CD4-positive, alpha-beta T cell (primary cell): ENCODE measurements at regions of chr6 and their contacts with region 1.

Region 1: GRCh38 chr6:17599885-17600526 is at the start of gene FAM8A1:
- DNase-seq: peak; percentile 93 to 98 (median 96)
- ATAC-seq: peak; percentile 88
- H3K4me3 ChIP-seq: peak within 1 kb of the TSS; percentile 69
- H3K4me3 Mint-ChIP-seq: peak within 1 kb of the TSS; percentile 92
- H3K27ac ChIP-seq: peak within 1 kb of the TSS; percentile 48 to 85
- H3K27ac Mint-ChIP-seq: peak within 1 kb of the TSS; percentile 86
- H3K4me1 ChIP-seq: peaks cover 24% of the 10 kb centered on the region
- H3K4me1 Mint-ChIP-seq: peaks cover 50% of the 10 kb centered on the region
- H3K27me3 ChIP-seq: no peaks in the 10 kb centered on the region
- H3K27me3 Mint-ChIP-seq: no peaks in the 10 kb centered on the region
- CTCF ChIP-seq: peak; percentile 29
- total RNA-seq, gene FAM8A1: 31.4 to 31.9 TPM

Region 2: DNA sequence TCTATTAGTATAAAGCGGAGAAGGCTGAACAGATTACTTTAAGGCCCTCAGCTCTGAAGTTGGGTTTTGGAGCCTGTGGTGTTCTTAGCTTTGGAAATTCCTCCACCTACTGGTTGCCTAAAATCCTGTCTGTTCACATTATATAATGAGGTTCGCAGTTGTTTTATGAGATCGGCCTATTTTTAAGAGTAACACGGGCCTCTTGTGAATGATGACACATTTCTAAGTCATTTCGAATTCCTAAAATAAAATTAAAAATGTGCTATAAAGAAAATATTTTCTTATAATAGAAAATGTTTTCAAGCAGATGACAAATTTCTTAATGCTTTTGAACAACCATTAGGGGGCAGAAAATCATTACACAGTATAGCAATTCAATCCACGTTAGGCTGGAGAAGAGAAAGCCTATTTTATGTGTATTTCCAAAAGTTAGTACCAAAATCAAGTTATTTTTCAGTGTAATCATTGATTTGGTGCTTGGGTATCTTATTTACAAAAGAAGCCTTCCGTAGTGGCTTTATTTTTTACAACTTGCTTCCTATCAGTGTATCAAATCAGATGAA is 15.7 kb before region 1 on chr6:
- CTCF ChIA-PET with region 1: interaction called, 4 read pairs
- POLR2A ChIA-PET with region 1: interaction called, 51 read pairs
- intact Hi-C with region 1: loop called in 1 of 2 experiments (anchors 1 kb)
- DNase-seq: peak in 4 of 14 experiments; percentile 17 to 70 (median 61)
- ATAC-seq: peak; percentile 69
- H3K4me3 ChIP-seq: no peak overlapping the region
- H3K4me3 Mint-ChIP-seq: no peak overlapping the region
- H3K27ac ChIP-seq: no peak overlapping the region
- H3K27ac Mint-ChIP-seq: peak overlapping the region; percentile 7
- H3K4me1 ChIP-seq: peaks cover 5% of the 10 kb centered on the region
- H3K4me1 Mint-ChIP-seq: peaks cover 10% of the 10 kb centered on the region
- H3K27me3 ChIP-seq: peaks cover 0 to 3% of the 10 kb centered on the region in 2 experiments
- H3K27me3 Mint-ChIP-seq: peaks cover 5% of the 10 kb centered on the region
- CTCF ChIP-seq: peak; percentile 99

Region 3: DNA sequence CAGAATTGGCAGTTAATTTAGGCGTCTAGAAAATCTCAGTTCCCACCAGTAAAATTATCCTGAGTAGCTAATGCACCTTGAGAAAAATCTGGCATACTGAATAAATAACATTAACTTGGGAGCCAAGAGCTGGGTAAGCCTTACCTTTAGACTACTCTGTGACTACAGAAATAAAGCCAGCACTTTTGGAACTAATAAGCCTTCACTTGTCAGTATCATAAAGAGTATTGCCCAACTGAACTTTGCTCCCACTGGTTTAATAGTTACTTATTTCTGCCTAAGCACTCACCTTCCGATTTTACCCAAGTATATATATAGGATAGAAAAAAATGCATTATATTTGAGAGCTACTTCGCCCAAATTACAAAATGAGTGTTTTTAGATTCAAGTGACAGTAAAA is 10.8 kb after region 1 on chr6:
- CTCF ChIA-PET with region 1: interaction called, 4 read pairs
- POLR2A ChIA-PET with region 1: interaction called, 15 read pairs
- intact Hi-C with region 1: no loop called
- DNase-seq: no peak
- ATAC-seq: no peak
- H3K4me3 ChIP-seq: no peak overlapping the region
- H3K4me3 Mint-ChIP-seq: no peak overlapping the region
- H3K27ac ChIP-seq: no peak overlapping the region
- H3K27ac Mint-ChIP-seq: peak overlapping the region; percentile 21
- H3K4me1 ChIP-seq: no peaks in the 10 kb centered on the region
- H3K4me1 Mint-ChIP-seq: peaks cover 6% of the 10 kb centered on the region
- H3K27me3 ChIP-seq: no peaks in the 10 kb centered on the region
- H3K27me3 Mint-ChIP-seq: no peaks in the 10 kb centered on the region
- CTCF ChIP-seq: no peak

Region 4: DNA sequence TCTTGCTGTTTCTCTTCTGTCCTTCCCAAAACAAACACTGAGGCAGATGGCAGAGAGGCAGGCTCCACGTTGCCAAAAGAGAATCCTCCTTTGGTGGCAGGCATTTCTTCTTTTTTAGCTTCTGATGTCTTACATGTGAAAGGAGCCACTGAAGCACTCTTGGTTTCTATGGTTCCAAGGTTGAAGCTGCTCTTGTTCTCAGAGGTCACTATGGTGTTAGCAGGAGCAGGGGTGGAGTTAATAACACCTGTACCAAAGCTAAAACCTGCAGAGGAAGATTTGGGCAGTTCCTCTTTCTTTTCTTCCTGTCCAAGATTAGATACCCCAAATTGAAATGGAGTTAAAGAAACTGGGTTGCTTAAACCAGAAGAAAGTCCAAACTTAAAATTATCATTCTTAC is 28.9 kb after region 1 on chr6:
- CTCF ChIA-PET with region 1: no interaction called
- POLR2A ChIA-PET with region 1: interaction called, 20 read pairs
- intact Hi-C with region 1: loop called in 1 of 2 experiments (anchors 2 kb)
- DNase-seq: no peak
- ATAC-seq: no peak
- H3K4me3 ChIP-seq: no peak overlapping the region
- H3K4me3 Mint-ChIP-seq: no peak overlapping the region
- H3K27ac ChIP-seq: no peak overlapping the region
- H3K27ac Mint-ChIP-seq: no peak overlapping the region
- H3K4me1 ChIP-seq: peaks cover 6% of the 10 kb centered on the region
- H3K4me1 Mint-ChIP-seq: peaks cover 55% of the 10 kb centered on the region
- H3K27me3 ChIP-seq: no peaks in the 10 kb centered on the region
- H3K27me3 Mint-ChIP-seq: no peaks in the 10 kb centered on the region
- CTCF ChIP-seq: no peak

Region 5: GRCh38 chr6:17706580-17707370 is 106.8 kb after region 1 on chr6 and contains the start of gene NUP153:
- CTCF ChIA-PET with region 1: interaction called, 3 read pairs
- POLR2A ChIA-PET with region 1: interaction called, 94 read pairs
- intact Hi-C with region 1: loop called (anchors 1 to 2 kb)
- DNase-seq: peak; percentile 98 to 100 (median 100)
- ATAC-seq: peak; percentile 79
- H3K4me3 ChIP-seq: peak within 1 kb of the TSS; percentile 82
- H3K4me3 Mint-ChIP-seq: peak within 1 kb of the TSS; percentile 95
- H3K27ac ChIP-seq: peak within 1 kb of the TSS; percentile 98 to 99
- H3K27ac Mint-ChIP-seq: peak within 1 kb of the TSS; percentile 93
- H3K4me1 ChIP-seq: peaks cover 41% of the 10 kb centered on the region
- H3K4me1 Mint-ChIP-seq: peaks cover 48% of the 10 kb centered on the region
- H3K27me3 ChIP-seq: no peaks in the 10 kb centered on the region
- H3K27me3 Mint-ChIP-seq: no peaks in the 10 kb centered on the region
- CTCF ChIP-seq: no peak
- total RNA-seq, gene NUP153: 58.3 to 61.0 TPM

Region 6: GRCh38 chr6:18264219-18264922 is 664.4 kb after region 1 on chr6 and contains the start of gene DEK:
- CTCF ChIA-PET with region 1: no interaction called
- POLR2A ChIA-PET with region 1: interaction called, 4 read pairs
- intact Hi-C with region 1: loop called in 1 of 2 experiments (anchors 10 kb)
- DNase-seq: peak; percentile 69 to 91 (median 80)
- ATAC-seq: peak; percentile 68
- H3K4me3 ChIP-seq: peak within 1 kb of the TSS; percentile 91
- H3K4me3 Mint-ChIP-seq: peak within 1 kb of the TSS; percentile 98
- H3K27ac ChIP-seq: peak within 1 kb of the TSS; percentile 85 to 91
- H3K27ac Mint-ChIP-seq: peak within 1 kb of the TSS; percentile 98
- H3K4me1 ChIP-seq: peaks cover 37% of the 10 kb centered on the region
- H3K4me1 Mint-ChIP-seq: peaks cover 53% of the 10 kb centered on the region
- H3K27me3 ChIP-seq: no peaks in the 10 kb centered on the region
- H3K27me3 Mint-ChIP-seq: no peaks in the 10 kb centered on the region
- CTCF ChIP-seq: peak; percentile 63
- total RNA-seq, gene DEK: 52.7 to 56.7 TPM